Dorsolateral prefrontal cortex (tissue), 120 donors: ENCODE measurements at regions of chr2 and their contacts with region 1.

Region 1: DNA sequence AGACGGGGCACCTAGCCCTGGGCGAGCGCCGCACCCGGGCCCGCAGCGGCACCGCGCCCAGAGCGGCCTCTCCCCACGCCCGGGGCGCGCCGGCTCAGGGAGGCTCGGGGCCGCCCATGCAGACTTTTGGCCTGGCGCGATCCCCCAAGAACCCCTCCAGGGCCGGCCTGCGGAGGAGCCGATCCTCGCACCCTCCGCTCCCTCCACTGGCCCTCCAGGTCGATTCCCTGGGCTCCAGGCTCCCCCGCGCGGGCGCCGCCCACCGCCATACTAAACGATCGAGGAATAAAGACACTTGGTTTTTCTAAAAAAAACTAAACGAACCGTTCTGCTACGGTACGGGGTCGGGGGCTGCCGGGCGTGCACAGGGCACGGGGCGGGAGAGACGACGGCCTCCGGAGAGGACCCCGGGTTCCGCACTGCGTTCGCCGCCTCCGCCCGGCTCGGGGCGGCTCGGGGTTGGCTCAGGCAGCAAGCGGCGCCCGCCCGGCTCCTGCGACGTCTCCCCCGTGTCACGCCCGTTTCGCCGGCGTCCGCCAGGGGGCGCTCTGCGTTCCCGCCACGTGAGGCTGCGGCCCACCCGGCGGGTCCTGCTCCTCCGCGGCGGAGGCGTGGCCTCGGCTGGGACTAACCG is 365 bp upstream of the KHK start:
- DNase-seq: peak; percentile 86 to 98 (median 93)
- H3K4me3 ChIP-seq: peak overlapping the region; percentile 57 to 98 (median 79)
- H3K27ac ChIP-seq: peak overlapping the region; percentile 16 to 98 (median 93)
- H3K27me3 ChIP-seq: no peaks in the 10 kb centered on the region
- CTCF ChIP-seq: peak; percentile 69 to 98 (median 86)

Region 2: DNA sequence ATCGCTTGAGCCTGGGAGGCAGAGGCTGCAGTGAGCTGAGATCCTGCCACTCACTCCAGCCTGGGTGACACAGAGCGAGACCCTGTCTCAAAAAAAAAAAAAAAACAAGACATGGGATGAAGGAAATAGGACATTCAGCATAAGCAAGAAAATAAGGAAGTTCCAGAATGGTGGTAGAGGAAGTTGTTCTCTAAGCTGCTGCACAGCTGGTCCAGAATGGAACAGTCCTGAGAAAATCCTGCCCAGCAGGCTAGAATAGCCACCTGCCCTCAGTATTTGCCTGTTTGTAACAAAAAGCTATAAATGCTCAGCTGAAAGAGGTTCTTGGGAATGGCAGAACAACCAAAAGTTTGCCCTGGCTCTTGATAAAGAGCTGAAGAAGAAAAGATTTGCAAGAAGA is 126.9 kb before region 1 on chr2:
- intact Hi-C with region 1: loop called (anchors 2 kb)
- DNase-seq: no peak
- H3K4me3 ChIP-seq: no peak overlapping the region
- H3K27ac ChIP-seq: no peak overlapping the region
- H3K27me3 ChIP-seq: peaks cover 0 to 25% (median 0%) of the 10 kb centered on the region in 45 donors
- CTCF ChIP-seq: no peak

Region 3: GRCh38 chr2:27050281-27050995 is 35.8 kb before region 1 on chr2:
- intact Hi-C with region 1: loop called (anchors 1 to 2 kb)
- DNase-seq: peak; percentile 88 to 97 (median 94)
- H3K4me3 ChIP-seq: peak overlapping the region; percentile 68 to 98 (median 91)
- H3K27ac ChIP-seq: peak overlapping the region; percentile 73 to 100 (median 97)
- H3K27me3 ChIP-seq: no peaks in the 10 kb centered on the region
- CTCF ChIP-seq: peak in 36 of 56 donors; percentile 6 to 57 (median 34)

Region 4: DNA sequence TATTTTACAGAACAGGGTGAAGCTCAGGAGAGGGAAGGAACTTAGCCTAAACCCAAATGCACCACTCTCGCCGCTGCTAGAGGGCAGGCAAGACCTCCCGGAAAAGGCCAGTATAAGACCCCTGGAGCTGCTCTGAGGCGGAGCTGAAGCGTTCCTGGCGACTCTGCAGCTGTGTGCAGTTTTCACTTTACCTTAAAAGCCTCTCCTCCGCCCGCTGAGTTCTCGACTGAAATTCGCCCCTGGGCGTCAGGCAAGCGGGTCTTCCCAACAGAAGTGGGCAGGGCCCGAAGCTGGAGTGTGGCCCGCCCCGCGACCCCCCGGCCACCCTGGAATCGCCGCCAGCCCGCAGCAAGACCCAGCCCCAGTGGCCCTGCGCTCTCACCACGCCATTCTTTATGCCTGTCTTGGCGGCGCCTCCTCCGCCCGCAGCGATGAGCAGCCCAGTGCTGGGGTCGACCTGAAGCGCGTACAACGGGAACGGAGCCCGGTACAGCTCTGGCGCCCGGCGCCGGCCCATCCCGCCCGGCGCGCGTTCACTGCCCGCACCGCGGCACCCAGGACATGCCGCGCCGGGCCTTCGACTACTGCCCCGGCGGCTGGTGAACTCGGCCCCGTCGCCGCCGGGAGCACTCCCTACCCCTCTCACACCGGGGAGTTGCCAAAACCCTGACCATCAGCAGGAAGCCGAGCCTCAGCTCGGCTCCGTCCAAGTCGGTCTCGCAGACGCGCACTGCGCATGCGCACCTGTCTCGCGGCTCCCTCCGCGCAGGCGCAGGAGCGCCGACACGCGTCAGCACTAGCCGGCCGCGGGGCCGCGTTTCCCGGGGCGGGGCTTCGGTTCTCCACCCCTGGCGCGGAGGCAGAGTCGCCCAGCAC is 47.9 kb after region 1 on chr2 and contains the start of gene PREB:
- intact Hi-C with region 1: loop called (anchors 1 to 5 kb)
- DNase-seq: peak; percentile 88 to 99 (median 96)
- H3K4me3 ChIP-seq: peak within 1 kb of the TSS; percentile 45 to 100 (median 96)
- H3K27ac ChIP-seq: peak within 1 kb of the TSS in 57 of 59 donors; percentile 36 to 95 (median 87)
- H3K27me3 ChIP-seq: no peaks in the 10 kb centered on the region
- CTCF ChIP-seq: peak in 32 of 56 donors; percentile 3 to 55 (median 30)
- total RNA-seq, gene PREB: 25.2 to 52.0 (median 34.9) TPM

Region 5: GRCh38 chr2:27241761-27242613 is 155.8 kb after region 1 on chr2:
- intact Hi-C with region 1: no loop called
- DNase-seq: no peak
- H3K4me3 ChIP-seq: no peak overlapping the region
- H3K27ac ChIP-seq: no peak overlapping the region
- H3K27me3 ChIP-seq: no peaks in the 10 kb centered on the region
- CTCF ChIP-seq: no peak